Gastrocnemius medialis (tissue), 4 donors: ENCODE measurements at regions of chr15 and their contacts with region 1.

Region 1: GRCh38 chr15:59299929-59300617 is 72.6 kb downstream of the MYO1E start:
- DNase-seq: peak; percentile 49 to 81
- ATAC-seq: peak; percentile 54 to 70
- H3K4me3 ChIP-seq: no peak overlapping the region
- H3K27ac ChIP-seq: peak overlapping the region; percentile 38 to 66 (median 50)
- H3K4me1 ChIP-seq: peaks cover 36% of the 10 kb centered on the region in 2 donors
- H3K27me3 ChIP-seq: no peaks in the 10 kb centered on the region
- CTCF ChIP-seq: no peak
- POLR2A ChIP-seq: no peak

Region 2: DNA sequence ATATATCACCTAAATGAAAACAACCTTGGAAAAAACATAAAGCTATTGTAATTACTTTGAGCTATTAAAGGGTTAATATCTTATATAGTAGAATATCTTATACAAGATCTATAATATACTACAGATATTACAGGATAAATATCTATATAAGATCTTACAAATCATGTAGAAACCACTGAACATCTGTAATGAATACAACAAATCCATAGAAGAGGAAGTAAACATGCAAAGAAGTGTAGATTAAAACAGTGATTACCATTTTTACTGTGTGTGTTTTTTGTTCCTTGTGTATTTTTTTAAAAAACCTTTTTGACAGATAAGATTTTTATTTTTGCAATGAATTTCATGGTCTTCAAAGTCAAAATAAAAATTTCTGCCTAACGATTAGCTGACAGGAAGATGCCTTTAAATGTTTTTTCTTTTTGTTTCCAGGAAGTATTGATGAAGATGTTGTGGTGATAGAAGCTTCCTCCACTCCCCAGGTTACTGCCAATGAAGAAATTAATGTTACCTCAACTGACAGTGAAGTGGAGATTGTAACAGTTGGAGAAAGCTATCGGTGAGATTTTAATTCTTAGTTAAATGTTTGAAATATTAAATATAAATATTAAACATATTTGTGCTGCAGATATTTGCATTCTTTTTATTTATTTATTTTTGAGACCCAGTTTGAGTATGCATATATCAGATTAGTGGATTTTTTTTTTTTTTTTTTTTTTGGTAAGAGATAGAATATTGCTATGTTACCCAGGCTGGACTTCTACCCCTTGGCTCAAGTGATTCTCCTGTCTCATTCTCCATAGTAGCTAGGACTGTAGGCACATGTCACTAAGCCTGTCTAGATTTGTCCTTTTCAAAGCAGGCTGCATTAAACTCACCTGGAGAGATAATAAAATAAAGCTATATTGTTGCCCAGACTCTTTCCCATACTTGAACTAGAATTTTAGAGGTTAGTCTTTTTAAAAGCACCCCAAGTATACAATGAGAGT is 247.9 kb before region 1 on chr15:
- in situ Hi-C with region 1: no loop called
- intact Hi-C with region 1: no loop called
- DNase-seq: no peak
- ATAC-seq: no peak
- H3K4me3 ChIP-seq: no peak overlapping the region
- H3K27ac ChIP-seq: no peak overlapping the region
- H3K4me1 ChIP-seq: no peaks in the 10 kb centered on the region
- H3K27me3 ChIP-seq: no peaks in the 10 kb centered on the region
- CTCF ChIP-seq: no peak
- POLR2A ChIP-seq: no peak

Region 3: DNA sequence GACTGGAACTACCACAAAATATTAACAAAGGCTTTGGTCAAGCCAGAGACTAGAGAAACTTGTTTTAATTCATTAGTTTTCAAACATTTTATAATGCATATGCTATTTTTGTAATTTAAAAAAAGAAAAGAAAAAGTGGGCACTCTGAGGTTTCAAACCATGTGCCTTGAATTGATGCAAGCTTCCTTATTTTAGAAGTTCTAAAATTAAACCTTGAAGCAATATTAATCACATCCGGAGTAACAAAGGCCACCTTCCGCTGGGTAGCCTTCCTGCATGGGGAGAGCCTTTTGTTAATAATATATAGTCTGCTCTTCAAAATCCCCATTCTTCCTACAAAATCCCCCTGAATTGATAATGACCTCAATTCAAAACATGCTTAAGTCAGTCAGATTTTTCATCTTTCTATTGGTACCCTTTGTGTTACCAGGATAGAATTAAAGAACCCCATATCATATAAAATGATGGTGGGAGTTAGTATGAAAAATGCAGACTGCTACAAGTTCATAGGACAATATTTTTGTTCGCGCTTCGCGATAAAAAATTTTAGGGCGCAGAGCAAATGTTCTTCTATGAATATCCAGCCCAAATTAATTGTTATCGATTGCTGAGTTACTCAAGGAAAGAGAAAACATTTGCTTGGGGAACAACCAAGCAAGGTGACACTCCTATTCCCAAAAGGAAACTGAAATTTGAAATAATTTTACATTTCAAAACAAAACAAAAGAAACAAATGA is 62.8 kb before region 1 on chr15:
- in situ Hi-C with region 1: no loop called
- intact Hi-C with region 1: loop called (anchors 5 kb)
- DNase-seq: no peak
- ATAC-seq: no peak
- H3K4me3 ChIP-seq: no peak overlapping the region
- H3K27ac ChIP-seq: peak overlapping the region in 3 of 4 donors; percentile 2 to 21 (median 16)
- H3K4me1 ChIP-seq: peaks cover 12 to 13% of the 10 kb centered on the region in 2 donors
- H3K27me3 ChIP-seq: no peaks in the 10 kb centered on the region
- CTCF ChIP-seq: no peak
- POLR2A ChIP-seq: no peak